Activated T-helper 1 cell treated with anti-CD3 and anti-CD28 coated beads, Interleukin-12 subunit alpha, Interleukin-12 subunit beta, Interleukin-2, Interleukin-4 antibody, amounts not matched to agents 30 ng/mL and 10 ng/mL and 1 ng/mL, durations not matched to agents 14 hours and 24 hours and 36 hours (primary cell): ENCODE measurements at regions of chr1 and their contacts with region 1.

Region 1: GRCh38 chr1:161915051-161915503 is 108.6 kb downstream of the OLFML2B start:
- DNase-seq: no peak
- H3K4me3 Mint-ChIP-seq: no peak overlapping the region
- H3K27ac Mint-ChIP-seq: no peak overlapping the region
- H3K4me1 Mint-ChIP-seq: peaks cover 16% of the 10 kb centered on the region
- H3K27me3 Mint-ChIP-seq: no peaks in the 10 kb centered on the region

Region 2: GRCh38 chr1:161749509-161750407 is 165.3 kb before region 1 on chr1 and contains the start of gene DUSP12:
- intact Hi-C with region 1: no loop called
- DNase-seq: peak; percentile 82
- H3K4me3 Mint-ChIP-seq: peak within 1 kb of the TSS; percentile 98
- H3K27ac Mint-ChIP-seq: peak within 1 kb of the TSS; percentile 99
- H3K4me1 Mint-ChIP-seq: peaks cover 32% of the 10 kb centered on the region
- H3K27me3 Mint-ChIP-seq: peaks cover 27% of the 10 kb centered on the region
- total RNA-seq, gene DUSP12: 34.1 and 36.0 TPM in 2 replicates

Region 3: GRCh38 chr1:161962091-161962887 is 47.2 kb after region 1 on chr1:
- intact Hi-C with region 1: loop called (anchors 1 kb)
- DNase-seq: peak; percentile 5
- H3K4me3 Mint-ChIP-seq: peak overlapping the region; percentile 77
- H3K27ac Mint-ChIP-seq: peak overlapping the region; percentile 89
- H3K4me1 Mint-ChIP-seq: peaks cover 19% of the 10 kb centered on the region
- H3K27me3 Mint-ChIP-seq: no peaks in the 10 kb centered on the region

Region 4: GRCh38 chr1:162023547-162024501 is 108.7 kb after region 1 on chr1 and contains the start of gene OLFML2B:
- intact Hi-C with region 1: loop called (anchors 1 kb)
- DNase-seq: peak; percentile 47
- H3K4me3 Mint-ChIP-seq: peak within 1 kb of the TSS; percentile 89
- H3K27ac Mint-ChIP-seq: peak within 1 kb of the TSS; percentile 41
- H3K4me1 Mint-ChIP-seq: peaks cover 7% of the 10 kb centered on the region
- H3K27me3 Mint-ChIP-seq: peaks cover 50% of the 10 kb centered on the region
- total RNA-seq, gene OLFML2B: not detected in 2 replicates